ENCODE measurements at regions of chr5 and their contacts with region 1.

Region 1: DNA sequence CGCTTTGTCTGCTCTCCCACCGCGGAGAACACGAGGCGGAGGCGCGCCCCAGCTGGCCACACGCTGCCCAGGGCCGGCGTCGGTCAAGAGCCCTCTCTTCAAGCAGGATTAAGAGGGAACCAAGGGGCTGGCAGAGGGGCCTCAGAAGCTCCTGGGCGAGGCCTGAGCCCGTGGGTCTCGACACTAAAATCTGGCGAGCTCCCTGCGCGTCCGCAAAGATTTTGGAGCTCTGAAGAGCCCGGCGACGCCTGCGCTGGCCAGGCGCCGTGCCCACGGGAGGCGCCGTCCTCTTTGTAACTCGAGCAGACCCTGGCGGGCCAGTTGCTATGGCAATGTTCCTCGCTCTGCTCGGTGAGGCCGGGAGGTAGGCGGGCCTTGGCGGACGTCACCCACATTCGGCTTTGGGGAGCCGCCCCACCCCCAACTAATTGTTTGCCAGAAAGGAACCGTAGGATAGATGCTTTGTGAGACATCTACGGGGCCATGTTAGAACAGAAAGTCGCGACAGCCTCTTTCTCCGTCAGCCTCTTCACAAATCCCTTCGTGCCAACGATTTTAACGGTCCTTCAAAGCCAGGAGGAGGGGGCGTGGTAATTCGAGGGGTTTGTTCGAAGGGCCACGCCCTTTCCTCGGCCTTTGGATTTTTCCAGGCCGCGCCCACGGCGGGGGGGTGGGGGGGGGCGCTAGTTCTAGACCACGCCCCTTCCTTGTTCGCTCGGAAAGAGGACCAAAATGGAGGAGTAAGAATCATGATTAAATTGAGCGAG is 714 bp upstream of the CNOT8 start:
- DNase-seq: peak; percentile 93 to 95
- H3K4me3 ChIP-seq: peak overlapping the region; percentile 51
- H3K4me3 Mint-ChIP-seq: peak overlapping the region; percentile 94
- H3K27ac Mint-ChIP-seq: peak overlapping the region; percentile 95
- H3K4me1 ChIP-seq: peaks cover 7% of the 10 kb centered on the region
- H3K4me1 Mint-ChIP-seq: peaks cover 12% of the 10 kb centered on the region
- H3K27me3 ChIP-seq: no peaks in the 10 kb centered on the region
- H3K27me3 Mint-ChIP-seq: no peaks in the 10 kb centered on the region
- CTCF ChIP-seq: peak in 1 of 2 experiments; percentile 29

Region 2: DNA sequence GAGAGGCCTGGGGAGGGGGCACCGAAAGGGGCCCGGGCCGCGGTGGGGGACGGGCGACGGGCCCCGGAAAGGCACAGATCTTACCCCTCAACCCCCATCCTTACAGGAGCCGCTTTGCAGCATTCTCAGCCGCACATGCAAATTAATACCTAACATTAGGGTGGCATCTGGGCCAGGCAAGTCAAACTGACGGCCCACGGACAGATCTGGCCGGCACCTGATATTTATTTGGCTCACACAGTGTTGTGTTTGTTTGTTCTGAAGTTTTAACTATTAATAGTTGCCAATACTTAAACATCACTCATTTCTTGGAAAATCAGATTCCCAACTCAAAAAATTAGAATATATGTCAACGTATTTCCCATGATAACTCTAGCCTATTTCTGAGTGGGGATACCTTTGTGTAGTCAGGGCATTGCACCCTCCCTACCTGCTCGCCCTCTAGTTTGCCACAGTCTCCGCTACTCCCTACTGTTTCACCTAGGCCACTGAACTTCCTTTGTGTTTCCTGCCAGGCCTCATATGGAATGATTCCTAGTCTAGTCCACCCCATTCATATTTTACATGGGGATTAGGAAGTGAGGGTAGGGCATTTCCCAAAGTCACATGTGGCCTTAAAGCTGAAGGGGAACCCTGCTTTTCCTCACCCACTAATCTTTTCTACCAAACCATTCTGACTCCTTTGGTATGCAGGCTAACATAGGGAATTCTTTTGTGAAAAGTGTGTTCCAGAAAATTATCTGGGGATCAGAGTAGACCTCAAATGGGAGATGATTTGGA is 174.4 kb before region 1 on chr5:
- CTCF ChIA-PET with region 1: interaction called, 3 read pairs
- POLR2A ChIA-PET with region 1: interaction called, 7 read pairs
- intact Hi-C with region 1: loop called (anchors 1 kb)
- DNase-seq: no peak
- H3K4me3 ChIP-seq: peak overlapping the region; percentile 58
- H3K4me3 Mint-ChIP-seq: peak overlapping the region; percentile 89
- H3K27ac Mint-ChIP-seq: peak overlapping the region; percentile 95
- H3K4me1 ChIP-seq: peaks cover 12% of the 10 kb centered on the region; the same call in 1 of the 2 replicates
- H3K4me1 Mint-ChIP-seq: peaks cover 11% of the 10 kb centered on the region
- H3K27me3 ChIP-seq: no peaks in the 10 kb centered on the region
- H3K27me3 Mint-ChIP-seq: no peaks in the 10 kb centered on the region
- CTCF ChIP-seq: no peak

Region 3: DNA sequence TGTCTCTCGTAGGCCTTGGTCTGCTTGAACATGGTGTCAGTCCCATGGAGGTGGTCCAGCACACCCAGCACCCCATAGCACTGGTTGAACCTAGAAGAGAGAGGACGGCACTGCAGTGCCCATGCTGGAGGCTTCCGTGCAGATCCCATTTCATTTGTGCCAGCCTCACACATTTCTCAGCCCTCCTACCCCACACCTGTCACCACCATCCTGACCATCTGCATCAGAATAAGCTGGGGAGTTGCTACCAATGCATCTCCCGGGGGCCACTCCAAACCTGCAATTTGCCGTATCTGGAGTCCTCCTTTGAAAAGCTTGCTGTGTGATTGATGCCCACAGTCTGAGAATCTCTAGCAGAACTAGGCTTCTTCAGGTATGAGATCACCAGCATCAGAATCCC is 37.3 kb before region 1 on chr5:
- CTCF ChIA-PET with region 1: no interaction called
- POLR2A ChIA-PET with region 1: no interaction called
- intact Hi-C with region 1: loop called (anchors 5 kb)
- DNase-seq: no peak
- H3K4me3 ChIP-seq: no peak overlapping the region
- H3K4me3 Mint-ChIP-seq: no peak overlapping the region
- H3K27ac Mint-ChIP-seq: peak overlapping the region; percentile 37
- H3K4me1 ChIP-seq: no peaks in the 10 kb centered on the region; the same call in 1 of the 2 replicates
- H3K4me1 Mint-ChIP-seq: no peaks in the 10 kb centered on the region
- H3K27me3 ChIP-seq: no peaks in the 10 kb centered on the region
- H3K27me3 Mint-ChIP-seq: no peaks in the 10 kb centered on the region
- CTCF ChIP-seq: no peak

Region 4: DNA sequence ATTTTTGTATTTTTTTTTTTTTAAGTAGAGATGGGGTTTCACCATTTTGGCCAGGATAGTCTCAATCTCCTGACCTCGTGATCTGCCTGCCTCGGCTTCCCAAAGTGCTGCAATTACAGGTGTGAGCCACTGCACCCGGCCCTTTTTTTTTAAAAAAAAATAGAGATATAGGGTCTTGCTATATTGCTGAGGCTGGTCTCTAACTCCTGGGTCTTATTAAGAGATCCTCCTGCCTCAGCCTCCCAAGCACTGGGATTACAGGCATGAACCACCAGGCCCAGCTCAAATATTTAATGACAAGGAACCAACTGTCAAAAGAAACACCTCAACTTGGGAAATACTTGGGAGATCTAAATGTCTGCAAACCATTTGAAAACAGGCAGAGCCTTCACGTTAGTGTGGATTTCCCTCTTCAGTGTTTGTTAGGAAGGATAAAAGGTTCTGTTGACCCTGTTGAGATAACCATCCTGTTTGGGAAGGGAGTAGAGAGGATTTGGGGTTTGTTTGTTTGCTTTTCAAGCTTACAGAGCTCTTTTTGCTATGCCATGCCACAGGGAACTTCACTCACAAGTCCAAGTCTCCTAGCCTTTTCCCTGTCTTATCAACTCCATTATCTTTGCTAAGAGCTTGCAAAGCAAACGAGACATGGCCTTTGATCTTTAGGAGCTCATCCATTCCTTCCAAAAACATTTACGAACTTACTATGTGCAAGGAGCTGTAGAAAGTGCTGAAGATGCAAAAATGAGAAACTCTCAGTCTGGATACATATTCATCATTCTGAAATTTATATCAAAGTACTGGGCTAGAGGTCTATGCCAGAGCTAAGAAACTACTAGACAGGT is 14.8 kb before region 1 on chr5:
- CTCF ChIA-PET with region 1: interaction called, 3 read pairs
- POLR2A ChIA-PET with region 1: interaction called, 9 read pairs
- intact Hi-C with region 1: loop called (anchors 1 kb)
- DNase-seq: peak; percentile 56 to 63
- H3K4me3 ChIP-seq: no peak overlapping the region
- H3K4me3 Mint-ChIP-seq: peak overlapping the region; percentile 29
- H3K27ac Mint-ChIP-seq: no peak overlapping the region
- H3K4me1 ChIP-seq: peaks cover 47% of the 10 kb centered on the region
- H3K4me1 Mint-ChIP-seq: peaks cover 32% of the 10 kb centered on the region
- H3K27me3 ChIP-seq: no peaks in the 10 kb centered on the region
- H3K27me3 Mint-ChIP-seq: no peaks in the 10 kb centered on the region
- CTCF ChIP-seq: no peak

Region 5: GRCh38 chr5:154940772-154941620 is 83.3 kb after region 1 on chr5 and contains the start of gene MRPL22:
- CTCF ChIA-PET with region 1: no interaction called
- POLR2A ChIA-PET with region 1: interaction called, 3 read pairs
- intact Hi-C with region 1: loop called (anchors 2 kb)
- DNase-seq: peak; percentile 93 to 95
- H3K4me3 ChIP-seq: peak within 1 kb of the TSS; percentile 65
- H3K4me3 Mint-ChIP-seq: peak within 1 kb of the TSS; percentile 93
- H3K27ac Mint-ChIP-seq: peak within 1 kb of the TSS; percentile 90
- H3K4me1 ChIP-seq: peaks cover 14% of the 10 kb centered on the region
- H3K4me1 Mint-ChIP-seq: peaks cover 14% of the 10 kb centered on the region
- H3K27me3 ChIP-seq: no peaks in the 10 kb centered on the region
- H3K27me3 Mint-ChIP-seq: no peaks in the 10 kb centered on the region
- CTCF ChIP-seq: no peak
- total RNA-seq, gene MRPL22: 84.8 and 87.8 TPM in 2 replicates

Measured in Caco-2 (cell line).